Colonic mucosa (tissue), 4 donors: ENCODE measurements at regions of chr7 and their contacts with region 1.

Region 1: GRCh38 chr7:47195641-47196040 is 386.3 kb downstream of the TNS3 start:
- DNase-seq: no peak
- H3K4me3 ChIP-seq: no peak overlapping the region
- H3K27ac ChIP-seq: no peak overlapping the region
- H3K4me1 ChIP-seq: peaks cover 14% of the 10 kb centered on the region
- H3K27me3 ChIP-seq: no peaks in the 10 kb centered on the region
- CTCF ChIP-seq: no peak

Region 2: GRCh38 chr7:47254081-47255006 is 58.7 kb after region 1 on chr7:
- intact Hi-C with region 1: loop called (anchors 5 kb)
- DNase-seq: peak; percentile 73
- H3K4me3 ChIP-seq: peak overlapping the region; percentile 39
- H3K27ac ChIP-seq: peak overlapping the region; percentile 11
- H3K4me1 ChIP-seq: no peaks in the 10 kb centered on the region
- H3K27me3 ChIP-seq: no peaks in the 10 kb centered on the region
- CTCF ChIP-seq: peak; percentile 96